ENCODE measurements at regions of chr1 and their contacts with region 1.

Region 1: DNA sequence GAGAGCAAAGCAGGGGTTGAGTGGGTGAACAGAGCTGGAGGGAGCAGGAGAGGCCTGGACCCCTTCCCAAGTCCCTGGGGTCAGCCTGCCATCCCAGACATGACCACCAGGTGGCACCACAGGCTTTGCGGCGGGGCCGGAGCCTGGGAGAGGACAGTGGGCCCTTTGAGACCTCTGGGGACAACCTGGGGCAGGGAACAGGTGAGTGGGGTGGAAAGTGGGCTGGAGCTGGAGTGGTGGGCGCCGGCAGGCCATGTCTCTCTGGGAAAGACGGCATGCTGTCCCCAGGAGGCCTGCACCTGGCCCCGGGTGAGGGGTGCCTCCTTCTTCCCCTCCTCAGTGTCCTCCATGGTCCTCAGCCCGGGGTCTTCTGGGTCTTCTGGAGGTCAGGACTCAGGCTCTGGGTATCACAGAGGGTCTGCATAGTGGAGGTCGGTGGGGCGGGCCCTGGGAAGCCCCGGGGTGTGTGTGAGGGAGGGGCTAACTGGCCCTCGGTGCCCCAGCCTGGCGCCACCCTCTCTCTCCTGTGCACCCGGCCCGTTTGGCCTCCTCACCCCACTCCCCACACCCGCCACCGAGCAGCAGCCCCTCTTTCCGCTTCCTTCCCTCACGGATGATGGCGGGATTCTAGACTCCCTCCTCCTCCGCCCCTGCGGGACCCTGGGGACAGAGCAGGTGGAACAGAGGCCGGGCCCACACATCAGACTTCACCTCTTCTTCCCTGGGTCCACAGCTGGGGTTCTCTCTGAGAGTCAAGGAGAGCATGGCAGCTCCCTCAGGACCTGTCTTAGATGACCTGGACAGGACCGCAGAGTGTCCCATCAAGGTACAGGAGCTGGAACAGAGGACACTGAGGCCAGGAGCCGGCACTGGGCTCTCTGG is 28.4 kb upstream of the PKP1 start:
- DNase-seq: peak; percentile 80
- H3K4me3 Mint-ChIP-seq: no peak overlapping the region
- H3K27ac Mint-ChIP-seq: no peak overlapping the region
- H3K4me1 Mint-ChIP-seq: no peaks in the 10 kb centered on the region
- H3K27me3 Mint-ChIP-seq: no peaks in the 10 kb centered on the region
- CTCF ChIP-seq: peak; percentile 100

Region 2: DNA sequence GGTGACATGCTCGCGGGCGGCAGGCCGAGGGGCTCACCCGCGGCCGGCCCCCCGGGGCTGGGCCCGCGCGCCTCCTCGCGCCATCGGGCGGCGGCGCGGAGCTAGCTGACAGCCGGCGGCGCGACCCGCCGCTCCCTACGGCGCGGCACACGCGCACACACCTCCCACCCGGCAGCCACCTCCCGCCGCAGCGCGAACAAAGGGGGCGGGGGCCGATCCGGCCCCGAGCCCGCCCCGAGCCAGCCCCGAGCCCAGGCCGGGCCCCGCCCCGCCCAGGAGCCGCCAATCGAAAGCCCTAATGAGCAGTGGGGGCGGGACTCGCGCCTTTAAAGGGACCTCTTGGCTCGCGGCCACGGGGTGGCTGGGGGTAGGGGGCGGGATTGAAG is 231.4 kb before region 1 on chr1 and contains the start of gene KIF21B:
- CTCF ChIA-PET with region 1: no interaction called
- POLR2A ChIA-PET with region 1: no interaction called
- intact Hi-C with region 1: no loop called
- DNase-seq: peak; percentile 90
- H3K4me3 Mint-ChIP-seq: peak within 1 kb of the TSS; percentile 43
- H3K27ac Mint-ChIP-seq: no peak within 1 kb of the TSS
- H3K4me1 Mint-ChIP-seq: peaks cover 22% of the 10 kb centered on the region
- H3K27me3 Mint-ChIP-seq: no peaks in the 10 kb centered on the region
- CTCF ChIP-seq: no peak
- total RNA-seq, gene KIF21B: 9.5 and 12.7 TPM in 2 replicates

Region 3: DNA sequence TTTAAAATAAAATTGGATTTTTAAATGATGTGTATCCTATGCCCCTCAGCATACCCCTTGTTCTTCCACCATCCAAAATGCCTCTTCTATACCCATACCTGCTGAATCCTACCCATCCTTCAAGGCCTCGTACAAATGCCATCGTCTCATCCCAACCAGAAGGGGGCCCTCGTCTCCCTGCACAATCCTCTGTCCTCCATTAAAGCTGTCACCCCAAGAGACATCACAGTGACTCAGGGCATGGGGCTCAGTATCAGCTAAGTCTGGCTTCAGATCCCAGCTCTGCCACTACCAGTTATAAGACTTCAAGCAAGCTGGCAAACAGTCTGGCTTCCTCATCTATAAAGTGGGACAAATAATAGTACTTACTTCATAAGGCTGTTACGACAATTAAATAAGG is 40.4 kb before region 1 on chr1:
- CTCF ChIA-PET with region 1: no interaction called
- POLR2A ChIA-PET with region 1: no interaction called
- intact Hi-C with region 1: no loop called
- DNase-seq: peak; percentile 46
- H3K4me3 Mint-ChIP-seq: no peak overlapping the region
- H3K27ac Mint-ChIP-seq: no peak overlapping the region
- H3K4me1 Mint-ChIP-seq: no peaks in the 10 kb centered on the region
- H3K27me3 Mint-ChIP-seq: peaks cover 40% of the 10 kb centered on the region
- CTCF ChIP-seq: peak; percentile 16

Region 4: GRCh38 chr1:201268604-201269151 is 13.8 kb after region 1 on chr1:
- CTCF ChIA-PET with region 1: interaction called, 79 read pairs
- POLR2A ChIA-PET with region 1: interaction called, 21 read pairs
- intact Hi-C with region 1: no loop called
- DNase-seq: peak; percentile 99
- H3K4me3 Mint-ChIP-seq: no peak overlapping the region
- H3K27ac Mint-ChIP-seq: peak overlapping the region; percentile 89
- H3K4me1 Mint-ChIP-seq: peaks cover 48% of the 10 kb centered on the region
- H3K27me3 Mint-ChIP-seq: no peaks in the 10 kb centered on the region
- CTCF ChIP-seq: no peak

Region 5: DNA sequence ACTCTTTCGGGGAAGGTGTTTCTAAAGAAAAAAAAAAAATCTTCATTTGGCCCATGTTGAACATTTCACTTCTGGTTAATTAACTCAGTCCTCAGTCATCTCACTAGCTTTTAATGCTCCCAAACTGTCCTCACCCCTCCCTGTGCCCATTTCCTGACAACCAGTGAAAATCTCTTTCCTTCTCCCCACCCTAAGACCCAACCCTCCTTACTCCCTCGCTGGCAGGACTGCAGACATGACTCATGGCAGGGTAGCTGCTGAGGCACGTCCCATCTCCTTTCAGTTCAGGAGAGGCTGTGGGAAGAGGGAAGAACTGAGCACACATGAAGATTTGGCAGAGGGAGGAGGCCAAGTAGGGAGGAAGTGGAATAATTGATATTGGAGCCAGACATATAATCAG is 41.0 kb after region 1 on chr1:
- CTCF ChIA-PET with region 1: interaction called, 474 read pairs
- POLR2A ChIA-PET with region 1: interaction called, 3,819 read pairs
- intact Hi-C with region 1: loop called (anchors 1 kb)
- DNase-seq: peak; percentile 100
- H3K4me3 Mint-ChIP-seq: peak overlapping the region; percentile 42
- H3K27ac Mint-ChIP-seq: peak overlapping the region; percentile 75
- H3K4me1 Mint-ChIP-seq: peaks cover 50% of the 10 kb centered on the region
- H3K27me3 Mint-ChIP-seq: no peaks in the 10 kb centered on the region
- CTCF ChIP-seq: no peak

Region 6: GRCh38 chr1:201334325-201335173 is 79.7 kb after region 1 on chr1:
- CTCF ChIA-PET with region 1: interaction called, 16 read pairs
- POLR2A ChIA-PET with region 1: interaction called, 4 read pairs
- intact Hi-C with region 1: no loop called
- DNase-seq: no peak
- H3K4me3 Mint-ChIP-seq: no peak overlapping the region
- H3K27ac Mint-ChIP-seq: no peak overlapping the region
- H3K4me1 Mint-ChIP-seq: peaks cover 11% of the 10 kb centered on the region
- H3K27me3 Mint-ChIP-seq: no peaks in the 10 kb centered on the region
- CTCF ChIP-seq: no peak

Region 7: GRCh38 chr1:201376464-201377374 is 121.9 kb after region 1 on chr1:
- CTCF ChIA-PET with region 1: interaction called, 37 read pairs
- POLR2A ChIA-PET with region 1: interaction called, 4 read pairs
- intact Hi-C with region 1: no loop called
- DNase-seq: peak; percentile 80
- H3K4me3 Mint-ChIP-seq: no peak overlapping the region
- H3K27ac Mint-ChIP-seq: no peak overlapping the region
- H3K4me1 Mint-ChIP-seq: no peaks in the 10 kb centered on the region
- H3K27me3 Mint-ChIP-seq: peaks cover 37% of the 10 kb centered on the region
- CTCF ChIP-seq: peak; percentile 67

Region 8: DNA sequence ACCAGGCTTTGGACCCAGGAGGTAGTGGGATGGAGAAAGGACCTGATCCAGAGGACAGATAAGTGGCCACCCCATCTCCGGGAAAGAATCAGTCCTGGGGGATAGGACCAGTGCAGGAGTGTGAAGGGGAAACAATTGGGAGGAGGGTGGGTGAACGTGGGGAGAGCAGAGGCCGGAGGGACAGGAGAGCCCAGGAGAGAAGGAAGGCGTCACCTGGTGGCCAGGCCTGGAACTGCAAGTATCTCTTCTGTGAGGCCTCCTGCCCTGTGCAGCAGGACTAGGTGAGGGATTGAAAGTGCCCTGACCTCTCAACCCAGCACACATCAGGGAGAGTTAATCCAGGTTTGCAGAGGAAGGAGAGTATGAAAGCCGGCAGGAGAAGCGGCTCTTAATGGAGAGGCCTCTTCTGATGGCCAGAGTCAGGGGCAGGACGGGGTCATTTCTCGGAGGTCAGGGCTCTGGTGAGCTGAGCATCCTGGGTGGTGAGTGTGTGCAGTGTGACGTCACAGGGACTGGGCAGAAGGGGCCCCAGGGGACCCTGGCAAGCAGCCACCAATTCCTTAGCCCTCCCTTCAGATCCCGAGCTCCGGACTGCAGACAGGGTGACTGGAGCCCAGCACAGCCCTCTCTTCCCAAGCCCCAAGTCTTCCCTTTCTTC is 153.4 kb after region 1 on chr1:
- CTCF ChIA-PET with region 1: interaction called, 78 read pairs
- POLR2A ChIA-PET with region 1: interaction called, 3 read pairs
- intact Hi-C with region 1: loop called (anchors 1 kb)
- DNase-seq: peak; percentile 90
- H3K4me3 Mint-ChIP-seq: no peak overlapping the region
- H3K27ac Mint-ChIP-seq: no peak overlapping the region
- H3K4me1 Mint-ChIP-seq: peaks cover 5% of the 10 kb centered on the region
- H3K27me3 Mint-ChIP-seq: peaks cover 32% of the 10 kb centered on the region
- CTCF ChIP-seq: peak; percentile 100

Region 9: GRCh38 chr1:201539561-201540354 is 284.9 kb after region 1 on chr1:
- CTCF ChIA-PET with region 1: no interaction called
- POLR2A ChIA-PET with region 1: no interaction called
- intact Hi-C with region 1: no loop called
- DNase-seq: no peak
- H3K4me3 Mint-ChIP-seq: peak overlapping the region; percentile 70
- H3K27ac Mint-ChIP-seq: no peak overlapping the region
- H3K4me1 Mint-ChIP-seq: peaks cover 32% of the 10 kb centered on the region
- H3K27me3 Mint-ChIP-seq: no peaks in the 10 kb centered on the region
- CTCF ChIP-seq: no peak

Measured in MCF 10A (cell line).